ENCODE measurements at regions of chr2 and their contacts with region 1.

Region 1: DNA sequence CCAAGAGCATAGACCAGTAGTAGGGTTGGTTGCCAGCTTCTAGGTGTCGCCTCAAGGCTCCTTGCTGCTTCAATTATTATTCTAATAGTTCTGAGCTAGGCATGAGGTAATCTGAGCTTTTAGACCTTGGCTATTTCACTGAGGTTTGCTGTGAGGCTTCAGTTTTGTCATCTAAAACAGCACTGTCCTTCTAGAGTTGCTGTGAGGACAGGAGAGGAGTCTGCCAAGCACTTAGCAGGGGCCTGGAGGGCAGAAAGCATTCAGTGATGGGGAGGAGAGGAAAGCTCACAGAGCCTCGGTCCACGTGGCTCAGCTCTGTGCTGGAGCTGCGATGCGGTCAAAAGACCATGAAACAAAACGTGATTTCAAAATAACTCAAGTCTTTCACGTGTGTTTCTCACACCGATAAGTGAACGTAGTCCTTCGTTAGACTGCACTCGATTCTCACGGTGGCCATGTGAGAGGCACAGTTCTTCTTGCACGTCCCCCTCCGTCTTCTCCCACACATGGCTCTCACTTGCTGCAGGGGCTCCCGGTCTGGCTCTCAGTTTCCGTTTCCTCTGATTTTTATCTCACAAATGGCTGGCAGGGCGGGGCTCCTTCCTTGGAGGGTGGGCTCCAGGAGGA is 113.7 kb downstream of the B3GNT2 start:
- DNase-seq: peak; percentile 75
- CTCF ChIP-seq: no peak

Region 2: GRCh38 chr2:62321380-62322289 is 12.1 kb after region 1 on chr2:
- CTCF ChIA-PET with region 1: interaction called, 9 read pairs
- POLR2A ChIA-PET with region 1: interaction called, 16 read pairs
- DNase-seq: no peak
- CTCF ChIP-seq: no peak

Region 3: GRCh38 chr2:62334440-62335058 is 25.0 kb after region 1 on chr2:
- CTCF ChIA-PET with region 1: interaction called, 16 read pairs
- POLR2A ChIA-PET with region 1: interaction called, 11 read pairs
- DNase-seq: peak; percentile 40
- CTCF ChIP-seq: no peak

Region 4: DNA sequence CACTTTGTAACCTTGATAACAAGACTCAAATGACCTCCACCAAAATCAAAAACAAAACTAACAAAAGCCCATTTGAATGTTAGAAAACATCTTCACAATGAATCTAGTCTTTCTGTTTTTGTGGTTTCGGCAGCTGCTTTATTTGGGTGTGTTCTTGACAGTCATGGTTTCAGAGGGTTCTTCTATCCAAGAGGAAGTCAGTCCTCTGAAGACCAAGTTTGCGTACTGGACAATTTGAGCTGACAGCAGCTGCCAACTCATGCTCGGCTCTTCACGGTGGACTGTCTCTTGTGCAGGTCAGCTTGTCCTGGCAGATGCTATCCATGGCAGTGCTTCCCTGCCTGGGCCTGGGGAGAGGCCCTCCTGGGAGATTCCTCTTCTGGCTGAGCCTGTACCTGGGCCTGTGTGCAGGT is 105.4 kb after region 1 on chr2:
- CTCF ChIA-PET with region 1: interaction called, 10 read pairs
- POLR2A ChIA-PET with region 1: no interaction called
- DNase-seq: peak; percentile 65
- CTCF ChIP-seq: no peak

Region 5: DNA sequence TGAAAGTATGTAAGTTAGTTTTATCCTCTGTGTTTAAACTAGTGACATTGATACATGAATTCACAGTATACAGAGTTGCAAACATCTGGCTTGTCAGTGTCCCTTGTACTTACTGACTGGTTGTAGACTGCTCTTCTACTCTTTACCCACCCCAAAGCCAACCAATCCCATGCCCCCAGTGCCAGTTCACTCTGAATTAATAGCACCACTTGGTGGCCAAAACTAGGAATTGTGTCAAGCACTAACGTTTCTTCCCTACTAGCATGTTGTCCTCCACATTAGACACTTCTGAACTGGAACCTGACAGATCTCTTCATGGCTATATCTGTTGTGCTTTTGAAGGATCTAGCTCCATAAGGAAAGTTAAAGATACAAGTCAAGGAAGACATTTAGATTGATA is 713.9 kb after region 1 on chr2:
- CTCF ChIA-PET with region 1: no interaction called
- POLR2A ChIA-PET with region 1: interaction called, 11 read pairs
- DNase-seq: peak; percentile 18
- CTCF ChIP-seq: no peak